AG04450 (cell line): ENCODE measurements at regions of chr16 and their contacts with region 1.

Region 1: DNA sequence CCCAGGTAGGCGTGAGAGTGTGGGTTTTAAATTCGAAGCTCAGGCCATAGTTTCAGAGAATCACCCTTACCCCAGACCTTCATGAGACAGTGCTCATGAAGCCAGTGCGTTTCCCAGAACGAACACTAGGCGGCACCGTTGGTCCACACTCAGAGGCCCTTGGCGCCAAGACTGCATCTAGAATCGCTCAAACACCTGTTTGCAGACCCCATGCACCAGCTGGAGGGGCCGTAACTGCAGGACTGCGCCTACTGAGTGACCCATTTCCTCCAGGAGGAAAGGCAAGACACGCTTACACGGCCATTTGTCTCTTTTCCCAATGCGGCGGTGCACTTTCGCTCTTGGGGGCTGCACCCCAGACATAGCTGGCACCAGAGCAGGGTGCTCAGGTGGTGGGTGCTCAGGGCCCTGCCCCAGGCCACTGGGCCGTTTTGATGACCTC is 34.0 kb downstream of the ADGRG5 start:
- DNase-seq: peak; percentile 30
- H3K4me3 ChIP-seq: no peak overlapping the region
- H3K27ac ChIP-seq: no peak overlapping the region
- H3K27me3 ChIP-seq: peaks cover 10% of the 10 kb centered on the region
- CTCF ChIP-seq: peak; percentile 97

Region 2: GRCh38 chr16:57462209-57462977 is 114.1 kb before region 1 on chr16 and contains the start of gene POLR2C:
- CTCF ChIA-PET with region 1: no interaction called
- POLR2A ChIA-PET with region 1: no interaction called
- DNase-seq: peak; percentile 51
- H3K4me3 ChIP-seq: peak within 1 kb of the TSS; percentile 89
- H3K27ac ChIP-seq: peak within 1 kb of the TSS; percentile 31
- H3K27me3 ChIP-seq: no peaks in the 10 kb centered on the region
- CTCF ChIP-seq: peak; percentile 84
- polyA plus RNA-seq, gene POLR2C: 143 and 149 TPM in 2 replicates

Region 3: GRCh38 chr16:57539072-57539796 is 37.2 kb before region 1 on chr16:
- CTCF ChIA-PET with region 1: no interaction called
- POLR2A ChIA-PET with region 1: no interaction called
- DNase-seq: no peak
- H3K4me3 ChIP-seq: no peak overlapping the region
- H3K27ac ChIP-seq: no peak overlapping the region
- H3K27me3 ChIP-seq: peaks cover 25% of the 10 kb centered on the region
- CTCF ChIP-seq: no peak

Region 4: DNA sequence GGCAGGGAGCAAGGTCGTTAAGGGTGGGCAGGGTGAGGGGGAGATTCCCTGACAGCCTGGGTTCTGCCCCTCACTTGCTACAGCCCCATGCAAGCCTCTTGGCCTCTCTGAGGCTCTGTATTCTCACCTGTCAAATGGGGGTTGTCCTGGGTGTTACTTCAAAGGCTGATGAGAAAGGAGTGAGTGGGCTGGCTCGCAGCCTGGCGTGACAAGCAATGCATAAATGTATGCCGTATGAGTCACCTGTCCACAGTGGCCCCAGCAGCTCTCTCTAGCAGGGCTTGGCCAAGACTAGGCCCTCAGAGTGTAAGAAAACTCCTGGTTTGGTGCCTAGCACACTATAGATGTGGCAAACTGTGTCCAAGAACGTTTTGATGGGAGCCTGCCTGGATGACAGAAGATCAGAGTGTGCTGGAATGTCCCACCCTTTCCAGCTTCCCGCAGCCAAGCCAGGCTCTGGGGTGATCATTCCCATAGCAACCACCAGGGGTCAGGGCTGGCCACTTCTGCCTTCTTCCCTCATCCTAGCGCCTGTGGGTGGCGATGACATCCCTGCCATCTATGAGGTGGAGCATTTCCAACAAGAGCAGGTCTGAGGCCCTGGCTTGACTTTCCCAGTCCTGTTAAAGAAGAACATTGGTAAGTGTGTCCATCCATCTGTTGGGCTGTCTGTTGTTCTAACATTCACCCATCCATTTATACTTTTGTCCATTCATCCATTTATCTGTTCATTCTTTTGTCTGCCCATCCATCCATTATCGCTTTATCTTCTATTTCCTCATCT is 14.8 kb after region 1 on chr16:
- CTCF ChIA-PET with region 1: interaction called, 25 read pairs
- POLR2A ChIA-PET with region 1: no interaction called
- DNase-seq: no peak
- H3K4me3 ChIP-seq: 0 out of 2 replicates have a peak overlapping the region, but pooled peaks have one; percentile 7
- H3K27ac ChIP-seq: peak overlapping the region; percentile 83
- H3K27me3 ChIP-seq: peaks cover 3% of the 10 kb centered on the region
- CTCF ChIP-seq: peak; percentile 93

Region 5: GRCh38 chr16:57720142-57720575 is 143.7 kb after region 1 on chr16:
- CTCF ChIA-PET with region 1: interaction called, 18 read pairs
- POLR2A ChIA-PET with region 1: no interaction called
- DNase-seq: peak; percentile 20
- H3K4me3 ChIP-seq: no peak overlapping the region
- H3K27ac ChIP-seq: no peak overlapping the region
- H3K27me3 ChIP-seq: peaks cover 4% of the 10 kb centered on the region
- CTCF ChIP-seq: peak; percentile 78

Region 6: DNA sequence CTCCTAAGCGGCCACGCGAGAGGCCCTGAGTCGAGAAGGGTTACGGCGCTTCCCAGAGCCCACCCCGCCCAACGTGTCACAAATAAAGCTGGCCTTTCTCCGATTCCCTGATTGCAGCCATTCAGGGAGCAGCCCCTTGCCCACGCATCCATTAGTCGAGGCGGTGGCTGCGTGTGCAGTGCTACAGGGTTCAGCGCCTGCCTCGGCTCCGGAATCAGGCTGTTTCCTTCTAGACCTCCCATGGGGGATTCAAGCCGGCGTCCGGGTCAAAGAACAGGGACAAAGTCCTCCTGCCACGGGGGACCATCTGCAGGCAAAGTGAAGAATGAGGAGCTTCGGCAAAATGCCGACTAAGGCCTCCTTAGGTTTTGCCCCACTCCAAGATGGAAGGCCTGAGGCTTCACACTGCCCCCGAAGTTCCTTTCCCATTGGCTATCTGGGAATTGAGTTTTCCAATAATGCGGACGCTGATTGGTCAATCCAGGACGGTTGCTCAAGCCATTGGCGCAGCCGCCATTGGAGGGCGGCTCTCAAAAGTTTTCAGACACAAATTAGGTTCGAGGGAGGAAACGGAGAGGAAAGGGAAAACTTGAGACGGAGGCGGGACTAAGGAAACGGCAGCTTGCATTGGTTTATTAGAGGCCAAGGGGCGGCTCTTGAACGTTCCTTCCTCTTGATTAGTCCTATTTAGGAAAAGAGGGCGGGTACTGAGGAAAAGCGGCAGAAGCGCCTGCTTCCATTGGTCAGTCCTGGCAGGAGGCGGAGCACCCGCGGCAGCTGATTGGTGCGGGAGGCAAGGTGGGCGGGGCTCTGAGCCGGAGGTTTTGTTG is 158.7 kb after region 1 on chr16:
- CTCF ChIA-PET with region 1: interaction called, 17 read pairs
- POLR2A ChIA-PET with region 1: no interaction called
- DNase-seq: peak; percentile 100
- H3K4me3 ChIP-seq: peak overlapping the region; percentile 94
- H3K27ac ChIP-seq: peak overlapping the region; percentile 95
- H3K27me3 ChIP-seq: no peaks in the 10 kb centered on the region
- CTCF ChIP-seq: no peak

Region 7: DNA sequence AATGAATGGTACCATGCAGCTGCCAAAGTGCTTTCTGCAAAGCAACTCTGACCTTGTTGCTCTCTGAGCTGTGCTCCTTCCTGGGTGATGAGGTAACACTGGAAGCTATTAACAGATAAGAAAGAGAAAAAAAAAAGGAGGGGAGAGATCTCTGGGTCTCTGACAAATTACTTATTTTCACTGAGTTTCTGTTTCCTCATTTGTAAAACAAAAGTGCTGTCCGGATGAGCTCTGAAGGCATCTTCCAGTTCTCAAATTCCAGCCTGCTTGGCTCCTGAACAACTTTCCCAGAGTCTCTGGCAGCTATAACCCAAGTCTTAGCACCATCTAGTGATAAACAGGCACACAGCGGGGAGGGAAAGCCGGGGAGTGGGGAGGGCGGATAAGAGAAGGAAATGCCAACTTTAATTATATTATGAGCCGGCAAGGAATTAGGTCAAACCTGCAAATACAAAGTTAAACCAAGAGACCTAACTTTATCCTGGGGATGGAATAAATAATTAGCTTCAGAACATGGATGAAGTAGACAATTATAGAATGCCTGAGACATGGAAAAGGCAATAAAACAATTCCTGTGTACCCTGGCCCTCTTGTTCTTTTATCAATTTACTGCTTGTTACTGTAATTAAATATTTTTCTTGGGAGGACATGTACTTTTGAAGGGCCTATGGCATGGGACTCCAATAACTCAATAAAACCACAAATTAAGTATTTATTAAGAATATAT is 287.1 kb after region 1 on chr16:
- CTCF ChIA-PET with region 1: interaction called, 10 read pairs
- POLR2A ChIA-PET with region 1: no interaction called
- DNase-seq: peak; percentile 45
- H3K4me3 ChIP-seq: no peak overlapping the region
- H3K27ac ChIP-seq: no peak overlapping the region
- H3K27me3 ChIP-seq: no peaks in the 10 kb centered on the region
- CTCF ChIP-seq: peak; percentile 75